ENCODE measurements at regions of chr3 and their contacts with region 1.

Region 1: DNA sequence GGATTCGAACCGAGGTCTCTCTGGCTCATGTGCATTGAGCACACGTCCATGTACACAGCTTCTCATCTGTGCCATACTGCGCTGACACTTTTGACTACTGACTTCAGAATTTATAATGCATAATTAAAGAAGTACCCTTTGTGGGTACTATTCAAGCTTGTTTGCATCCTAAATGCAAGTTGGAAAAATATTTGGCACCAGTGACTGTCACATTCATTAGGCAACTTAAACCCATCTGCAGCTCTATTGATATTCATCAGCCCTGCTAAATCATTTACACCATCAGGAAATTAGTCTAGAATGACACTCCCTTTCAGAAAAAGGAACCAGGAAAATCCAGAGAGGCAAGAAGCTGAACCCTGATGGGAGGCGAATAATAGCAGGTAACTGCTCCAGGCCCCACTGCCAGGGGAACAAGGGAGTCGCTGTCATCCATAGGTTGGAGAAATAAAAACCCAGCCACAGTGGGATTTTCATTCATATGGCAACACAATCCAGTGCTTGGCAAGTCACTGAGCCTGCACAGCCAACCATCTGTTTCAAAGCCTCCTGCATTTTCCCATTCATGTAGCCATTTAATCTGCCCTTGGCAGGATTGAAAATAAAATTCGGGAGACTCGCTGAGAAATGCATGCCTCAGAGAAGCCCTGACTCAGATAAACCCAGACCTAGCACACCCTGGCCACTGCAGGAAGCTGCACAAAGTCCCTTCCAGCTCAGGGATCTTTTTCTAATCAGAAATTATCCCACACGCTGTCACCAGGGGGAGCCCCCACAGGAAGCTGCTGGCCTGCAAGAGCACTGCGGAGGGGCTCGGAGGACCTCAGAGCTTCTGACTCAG is 103.0 kb upstream of the VEPH1 start:
- DNase-seq: peak; percentile 56
- H3K4me3 Mint-ChIP-seq: no peak overlapping the region
- H3K27ac Mint-ChIP-seq: no peak overlapping the region
- H3K4me1 Mint-ChIP-seq: peaks cover 2% of the 10 kb centered on the region
- H3K27me3 Mint-ChIP-seq: no peaks in the 10 kb centered on the region

Region 2: DNA sequence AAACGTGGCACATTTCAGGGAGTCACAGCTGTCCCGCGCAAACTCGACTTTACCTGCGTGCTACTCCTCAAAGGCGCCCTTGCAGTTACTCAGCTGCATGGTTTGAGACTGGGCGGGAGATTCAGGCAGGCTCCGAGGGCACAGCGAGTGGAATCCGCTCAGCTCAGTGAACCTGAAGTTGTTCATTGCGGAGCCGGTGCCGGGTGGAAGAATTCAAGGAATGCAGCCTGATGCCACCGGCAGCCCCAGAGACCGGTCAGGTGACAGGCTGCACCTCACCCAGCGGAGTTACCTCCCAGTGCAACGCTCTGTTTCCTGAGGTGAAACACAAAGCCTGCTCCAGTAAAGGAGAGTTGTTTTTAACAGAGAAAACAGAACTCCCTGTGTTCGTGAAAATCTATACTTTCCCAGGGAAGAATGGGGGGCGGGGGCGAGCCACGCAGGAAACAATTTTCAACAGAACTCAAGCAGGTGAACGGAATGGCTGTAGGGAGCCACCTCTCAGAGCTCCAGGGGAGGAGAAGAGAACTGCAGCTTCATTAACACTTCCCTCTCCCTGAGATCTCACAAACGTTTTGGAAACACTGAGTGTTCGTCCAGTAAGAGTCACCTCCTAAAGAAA is 106.8 kb before region 1 on chr3:
- CTCF ChIA-PET with region 1: no interaction called
- POLR2A ChIA-PET with region 1: no interaction called
- DNase-seq: no peak
- H3K4me3 Mint-ChIP-seq: no peak overlapping the region
- H3K27ac Mint-ChIP-seq: no peak overlapping the region
- H3K4me1 Mint-ChIP-seq: peaks cover 10% of the 10 kb centered on the region
- H3K27me3 Mint-ChIP-seq: peaks cover 39% of the 10 kb centered on the region

Region 3: GRCh38 chr3:157515398-157515797 is 90.8 kb before region 1 on chr3:
- CTCF ChIA-PET with region 1: no interaction called
- POLR2A ChIA-PET with region 1: no interaction called
- DNase-seq: no peak
- H3K4me3 Mint-ChIP-seq: no peak overlapping the region
- H3K27ac Mint-ChIP-seq: no peak overlapping the region
- H3K4me1 Mint-ChIP-seq: no peaks in the 10 kb centered on the region
- H3K27me3 Mint-ChIP-seq: no peaks in the 10 kb centered on the region

Region 4: GRCh38 chr3:157618075-157618760 is 12.0 kb after region 1 on chr3:
- CTCF ChIA-PET with region 1: interaction called, 15 read pairs
- POLR2A ChIA-PET with region 1: no interaction called
- DNase-seq: no peak
- H3K4me3 Mint-ChIP-seq: no peak overlapping the region
- H3K27ac Mint-ChIP-seq: no peak overlapping the region
- H3K4me1 Mint-ChIP-seq: no peaks in the 10 kb centered on the region
- H3K27me3 Mint-ChIP-seq: peaks cover 6% of the 10 kb centered on the region

Region 5: GRCh38 chr3:158434412-158435038 is 828.3 kb after region 1 on chr3:
- CTCF ChIA-PET with region 1: interaction called, 15 read pairs
- POLR2A ChIA-PET with region 1: no interaction called
- DNase-seq: peak; percentile 28
- H3K4me3 Mint-ChIP-seq: no peak overlapping the region
- H3K27ac Mint-ChIP-seq: no peak overlapping the region
- H3K4me1 Mint-ChIP-seq: no peaks in the 10 kb centered on the region
- H3K27me3 Mint-ChIP-seq: no peaks in the 10 kb centered on the region

Measured in activated CD4-positive, alpha-beta memory T cell treated with anti-CD3 and anti-CD28 coated beads, Interleukin-2, amount 10 ng/mL, durations not matched to agents 7 days and 5 days (primary cell).